K562 (cell line): ENCODE measurements at regions of chr22 and their contacts with region 1.

Region 1: DNA sequence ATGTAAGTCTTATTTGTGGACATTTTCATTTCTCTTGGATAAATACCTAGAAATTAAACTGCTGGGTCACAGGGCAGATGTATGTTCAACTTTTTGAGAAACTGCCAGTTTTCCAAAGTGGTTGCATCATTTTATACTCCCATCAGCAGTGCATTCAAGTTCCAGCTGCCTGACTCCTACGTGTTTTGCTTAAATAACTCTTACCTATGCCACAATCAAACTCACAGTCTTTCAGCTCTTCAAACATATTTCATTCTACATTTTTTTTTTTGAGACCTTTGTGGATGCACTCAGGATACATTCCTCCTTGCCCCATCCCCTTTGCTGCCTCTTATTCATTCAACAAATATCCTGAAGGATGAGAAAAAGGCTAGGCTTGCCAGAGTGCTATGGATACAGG is 9.2 kb downstream of the TCF20 start:
- DNase-seq: no peak
- ATAC-seq: no peak
- H3K4me3 ChIP-seq: no peak overlapping the region
- H3K27ac ChIP-seq: no peak overlapping the region
- H3K4me1 ChIP-seq: peaks cover 0 to 16% of the 10 kb centered on the region in 2 experiments; a peak in 3 of 5 replicates
- H3K27me3 ChIP-seq: no peaks in the 10 kb centered on the region
- CTCF ChIP-seq: no peak
- EP300 ChIP-seq: no peak
- POLR2A ChIP-seq: no peak
- RAD21 ChIP-seq: no peak

Region 2: DNA sequence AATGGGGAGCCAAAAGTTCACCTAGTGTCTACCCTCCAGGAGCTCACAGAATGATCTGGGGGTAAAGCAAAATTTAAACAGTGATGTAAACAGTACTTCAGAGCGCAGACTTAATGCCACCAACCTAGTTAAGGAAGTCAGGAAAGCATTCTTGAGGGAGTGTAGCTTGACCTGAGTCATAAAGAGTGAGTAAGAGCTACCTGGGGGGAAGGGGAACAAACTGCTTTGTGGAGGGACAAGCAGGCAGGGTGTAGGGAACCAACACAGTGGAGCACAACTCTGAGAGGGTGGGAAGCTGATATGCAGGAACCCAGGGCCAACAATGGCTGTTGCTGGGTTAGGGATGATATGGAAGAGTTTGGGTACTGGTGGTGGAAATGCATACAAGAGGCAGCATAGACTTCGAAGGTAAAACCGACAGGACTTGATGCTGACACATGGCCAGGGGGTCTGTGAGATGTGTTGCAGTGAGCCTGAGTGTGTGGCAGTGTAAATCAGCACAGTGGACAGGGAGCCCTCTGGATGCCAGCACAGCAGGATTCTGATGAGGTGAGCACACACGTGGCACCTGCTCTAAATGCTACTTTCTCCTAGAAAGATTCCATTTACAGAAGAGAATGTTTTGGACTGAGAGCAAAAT is 72.4 kb before region 1 on chr22:
- CTCF ChIA-PET with region 1: no interaction called
- POLR2A ChIA-PET with region 1: no interaction called
- in situ Hi-C with region 1: no loop called
- intact Hi-C with region 1: loop called (anchors 5 kb)
- DNase-seq: no peak
- ATAC-seq: no peak; the same call in 2 of the 3 replicates
- H3K4me3 ChIP-seq: no peak overlapping the region
- H3K27ac ChIP-seq: no peak overlapping the region
- H3K4me1 ChIP-seq: peaks cover 0 to 9% of the 10 kb centered on the region in 2 experiments; a peak in 2 of 5 replicates
- H3K27me3 ChIP-seq: no peaks in the 10 kb centered on the region
- CTCF ChIP-seq: no peak
- EP300 ChIP-seq: no peak
- POLR2A ChIP-seq: no peak
- RAD21 ChIP-seq: no peak